HepG2 (cell line): ENCODE measurements at regions of chr20 and their contacts with region 1.

Region 1: DNA sequence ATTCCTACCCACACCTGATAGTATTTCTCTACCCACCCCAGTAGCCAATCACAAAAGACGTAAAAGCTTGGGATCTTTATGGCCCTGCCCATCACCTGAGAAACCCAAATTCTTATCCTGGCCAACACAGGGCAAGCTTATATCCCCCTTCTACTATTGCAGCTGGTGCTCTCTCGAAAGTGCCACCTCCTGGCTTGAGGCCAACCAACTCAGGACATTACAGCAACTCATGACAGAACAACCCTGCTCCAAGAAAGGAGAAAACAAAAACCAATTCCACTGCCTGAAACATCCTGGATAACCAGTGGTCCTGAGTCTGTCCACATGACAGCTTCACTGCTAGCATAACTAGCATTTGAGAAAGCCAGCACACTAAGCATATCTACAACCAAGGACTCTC is 97.9 kb downstream of the CFAP61 start:
- DNase-seq: no peak
- ATAC-seq: no peak
- H3K4me3 ChIP-seq: no peak overlapping the region
- H3K27ac ChIP-seq: no peak overlapping the region
- H3K4me1 ChIP-seq: no peaks in the 10 kb centered on the region
- H3K27me3 ChIP-seq: no peaks in the 10 kb centered on the region
- CTCF ChIP-seq: no peak
- EP300 ChIP-seq: no peak
- POLR2A ChIP-seq: no peak
- RAD21 ChIP-seq: no peak

Region 2: DNA sequence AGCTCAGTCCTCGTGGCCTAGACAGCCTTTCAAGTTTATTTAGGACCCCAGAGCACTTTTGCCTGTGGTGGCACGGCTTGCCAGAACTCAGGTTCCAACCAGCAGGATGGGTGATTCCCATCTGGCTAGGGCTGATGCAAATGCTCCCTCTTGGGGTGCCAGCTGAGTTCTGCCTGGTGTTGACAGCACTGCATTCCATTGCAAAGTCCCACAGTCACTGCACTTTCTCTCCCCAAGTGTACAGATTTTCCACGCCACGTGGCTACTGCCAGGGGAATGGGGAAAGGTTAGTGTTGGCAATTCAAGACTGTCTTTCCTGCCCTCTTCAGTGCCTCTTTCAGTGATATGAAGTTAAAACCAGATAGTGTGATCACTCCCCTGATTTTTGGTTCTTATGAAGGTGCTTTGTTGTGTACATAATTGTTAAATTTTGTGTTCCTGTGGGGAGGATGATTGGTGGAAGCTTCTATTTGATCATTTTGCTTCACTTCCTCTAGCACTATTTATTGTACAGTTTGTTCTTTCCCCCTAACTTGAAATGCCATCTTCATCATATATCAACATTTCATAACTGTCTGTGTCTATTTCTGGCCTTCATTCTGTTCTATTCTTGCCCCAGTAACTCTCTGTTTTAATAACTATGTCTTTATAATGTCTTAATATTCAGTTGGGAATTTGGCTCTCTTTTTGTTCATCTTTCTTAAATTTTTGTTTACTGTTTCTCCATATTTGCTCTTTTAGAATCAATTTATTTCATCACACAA is 11.8 kb before region 1 on chr20:
- CTCF ChIA-PET with region 1: no interaction called
- POLR2A ChIA-PET with region 1: no interaction called
- in situ Hi-C with region 1: no loop called
- intact Hi-C with region 1: no loop called
- DNase-seq: no peak
- ATAC-seq: no peak; the same call in 2 of the 3 replicates
- H3K4me3 ChIP-seq: no peak overlapping the region
- H3K27ac ChIP-seq: no peak overlapping the region
- H3K4me1 ChIP-seq: no peaks in the 10 kb centered on the region
- H3K27me3 ChIP-seq: peaks cover 0 to 1% of the 10 kb centered on the region in 2 experiments; a peak in 1 of 5 replicates
- CTCF ChIP-seq: no peak
- EP300 ChIP-seq: no peak
- POLR2A ChIP-seq: no peak
- RAD21 ChIP-seq: no peak

Region 3: GRCh38 chr20:20161611-20162010 is 11.4 kb after region 1 on chr20:
- CTCF ChIA-PET with region 1: no interaction called
- POLR2A ChIA-PET with region 1: no interaction called
- in situ Hi-C with region 1: no loop called
- intact Hi-C with region 1: no loop called
- DNase-seq: no peak
- ATAC-seq: no peak; the same call in 2 of the 3 replicates
- H3K4me3 ChIP-seq: no peak overlapping the region
- H3K27ac ChIP-seq: no peak overlapping the region
- H3K4me1 ChIP-seq: no peaks in the 10 kb centered on the region
- H3K27me3 ChIP-seq: no peaks in the 10 kb centered on the region
- CTCF ChIP-seq: no peak
- EP300 ChIP-seq: no peak
- POLR2A ChIP-seq: no peak
- RAD21 ChIP-seq: no peak

Region 4: DNA sequence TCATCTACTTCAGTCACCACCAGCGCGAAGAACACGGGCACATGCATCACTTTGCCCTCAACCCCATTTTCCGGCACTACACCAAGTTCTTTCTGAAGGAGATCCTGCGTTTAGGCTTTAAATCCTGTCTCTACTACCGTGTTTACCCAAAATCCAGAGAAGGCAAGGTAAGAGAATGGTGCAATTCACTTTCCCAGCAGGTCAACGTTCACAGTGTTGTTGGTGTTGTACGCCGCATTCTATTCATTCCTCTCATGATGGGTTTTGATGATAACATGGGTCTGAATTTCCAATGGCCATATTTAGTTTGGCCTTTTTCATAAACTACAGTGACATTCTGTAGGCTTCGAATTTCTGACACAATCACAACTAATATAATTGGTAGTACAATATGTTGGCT is 46.4 kb after region 1 on chr20:
- CTCF ChIA-PET with region 1: no interaction called
- POLR2A ChIA-PET with region 1: no interaction called
- in situ Hi-C with region 1: no loop called
- intact Hi-C with region 1: loop called (anchors 1 kb)
- DNase-seq: peak; percentile 87
- ATAC-seq: peak; percentile 97
- H3K4me3 ChIP-seq: no peak overlapping the region; a peak in 1 of 6 replicates
- H3K27ac ChIP-seq: no peak overlapping the region
- H3K4me1 ChIP-seq: peaks cover 26% of the 10 kb centered on the region
- H3K27me3 ChIP-seq: no peaks in the 10 kb centered on the region
- CTCF ChIP-seq: no peak
- EP300 ChIP-seq: peak in 1 of 2 experiments; percentile 49; a peak in 1 of 4 replicates
- POLR2A ChIP-seq: no peak
- RAD21 ChIP-seq: no peak